ENCODE measurements at regions of chr17 and their contacts with region 1.

Region 1: DNA sequence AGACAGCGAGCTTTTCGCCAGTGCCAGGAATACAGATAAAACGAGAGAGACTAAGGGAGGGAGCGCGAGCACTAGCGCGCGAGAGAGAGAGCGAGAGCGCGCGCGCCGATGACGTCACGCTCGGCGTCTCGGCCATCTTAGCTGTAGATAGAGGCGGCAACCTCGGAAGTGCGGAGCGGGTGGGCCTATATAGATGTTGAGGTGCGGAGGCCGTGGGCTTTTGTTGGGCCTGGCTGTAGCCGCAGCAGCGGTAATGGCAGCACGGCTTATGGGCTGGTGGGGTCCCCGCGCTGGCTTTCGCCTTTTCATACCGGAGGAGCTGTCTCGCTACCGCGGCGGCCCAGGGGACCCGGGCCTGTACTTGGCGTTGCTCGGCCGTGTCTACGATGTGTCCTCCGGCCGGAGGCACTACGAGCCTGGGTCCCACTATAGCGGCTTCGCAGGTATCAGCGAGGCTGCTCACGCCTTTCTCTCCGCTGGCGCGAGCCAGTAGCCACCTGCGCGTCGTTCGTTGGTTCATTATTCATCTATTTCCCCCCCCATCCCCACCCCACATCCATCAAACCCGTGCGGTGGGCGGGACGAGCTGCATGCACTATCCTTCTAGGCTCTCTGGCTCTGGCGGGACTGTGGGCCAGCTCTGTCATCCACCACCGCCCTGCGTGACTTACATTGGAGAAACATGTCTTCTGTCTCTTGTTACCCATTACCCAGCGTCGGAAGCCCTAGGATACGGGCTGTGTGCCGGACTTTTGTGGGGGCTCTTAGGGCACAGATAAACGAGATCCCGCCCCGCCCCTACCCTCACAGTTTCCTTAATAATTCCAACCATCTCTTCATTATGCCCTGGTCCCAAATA is 795 bp downstream of the CYB5D2 start:
- DNase-seq: peak; percentile 95
- ATAC-seq: peak; percentile 82
- H3K4me3 Mint-ChIP-seq: peak overlapping the region; percentile 97
- H3K27ac Mint-ChIP-seq: peak overlapping the region; percentile 99
- H3K4me1 Mint-ChIP-seq: peaks cover 40% of the 10 kb centered on the region
- H3K27me3 Mint-ChIP-seq: no peaks in the 10 kb centered on the region

Region 2: GRCh38 chr17:2233441-2233947 is 1910.3 kb before region 1 on chr17:
- CTCF ChIA-PET with region 1: no interaction called
- POLR2A ChIA-PET with region 1: no interaction called
- intact Hi-C with region 1: no loop called
- DNase-seq: no peak
- ATAC-seq: no peak
- H3K4me3 Mint-ChIP-seq: no peak overlapping the region
- H3K27ac Mint-ChIP-seq: no peak overlapping the region
- H3K4me1 Mint-ChIP-seq: peaks cover 14% of the 10 kb centered on the region
- H3K27me3 Mint-ChIP-seq: no peaks in the 10 kb centered on the region

Region 3: GRCh38 chr17:2401426-2402221 is 1742.2 kb before region 1 on chr17:
- CTCF ChIA-PET with region 1: no interaction called
- POLR2A ChIA-PET with region 1: no interaction called
- intact Hi-C with region 1: loop called in 1 of 2 experiments (anchors 1 kb)
- DNase-seq: peak; percentile 100
- ATAC-seq: peak; percentile 59
- H3K4me3 Mint-ChIP-seq: peak overlapping the region; percentile 88
- H3K27ac Mint-ChIP-seq: peak overlapping the region; percentile 99
- H3K4me1 Mint-ChIP-seq: peaks cover 43% of the 10 kb centered on the region
- H3K27me3 Mint-ChIP-seq: no peaks in the 10 kb centered on the region

Region 4: DNA sequence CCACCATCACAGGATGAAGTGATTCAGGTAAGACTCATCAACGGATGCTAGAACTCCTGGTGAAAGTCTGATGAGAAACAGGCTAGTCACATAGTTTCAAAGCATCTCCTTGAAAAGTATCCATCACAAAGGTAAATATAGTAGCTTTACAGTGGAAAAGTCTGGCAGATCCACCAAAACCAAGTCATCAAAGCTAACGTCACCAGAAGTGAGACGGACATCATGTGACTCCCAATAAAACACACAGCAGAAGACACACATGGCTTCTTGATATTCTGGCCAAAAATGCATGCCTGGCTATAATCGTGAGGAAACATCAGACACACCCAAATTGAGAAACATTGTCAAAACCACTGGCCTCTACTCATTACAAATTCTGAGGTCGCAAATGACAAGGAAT is 568.3 kb before region 1 on chr17:
- CTCF ChIA-PET with region 1: no interaction called
- POLR2A ChIA-PET with region 1: no interaction called
- intact Hi-C with region 1: no loop called
- DNase-seq: no peak
- ATAC-seq: no peak
- H3K4me3 Mint-ChIP-seq: no peak overlapping the region
- H3K27ac Mint-ChIP-seq: no peak overlapping the region
- H3K4me1 Mint-ChIP-seq: no peaks in the 10 kb centered on the region
- H3K27me3 Mint-ChIP-seq: no peaks in the 10 kb centered on the region

Region 5: GRCh38 chr17:3845621-3846441 is 298.0 kb before region 1 on chr17 and contains the start of gene NCBP3:
- CTCF ChIA-PET with region 1: no interaction called
- POLR2A ChIA-PET with region 1: no interaction called
- intact Hi-C with region 1: loop called in 1 of 2 experiments (anchors 1 kb)
- DNase-seq: peak; percentile 96
- ATAC-seq: peak; percentile 93
- H3K4me3 Mint-ChIP-seq: peak within 1 kb of the TSS; percentile 84
- H3K27ac Mint-ChIP-seq: peak within 1 kb of the TSS; percentile 91
- H3K4me1 Mint-ChIP-seq: peaks cover 19% of the 10 kb centered on the region
- H3K27me3 Mint-ChIP-seq: no peaks in the 10 kb centered on the region
- total RNA-seq, gene NCBP3: 35.9 to 44.6 TPM

Region 6: GRCh38 chr17:3944485-3945388 is 199.1 kb before region 1 on chr17:
- CTCF ChIA-PET with region 1: no interaction called
- POLR2A ChIA-PET with region 1: no interaction called
- intact Hi-C with region 1: no loop called
- DNase-seq: peak; percentile 72
- ATAC-seq: peak; percentile 88
- H3K4me3 Mint-ChIP-seq: no peak overlapping the region
- H3K27ac Mint-ChIP-seq: no peak overlapping the region
- H3K4me1 Mint-ChIP-seq: no peaks in the 10 kb centered on the region
- H3K27me3 Mint-ChIP-seq: no peaks in the 10 kb centered on the region

Region 7: GRCh38 chr17:4087906-4088693 is 55.7 kb before region 1 on chr17:
- CTCF ChIA-PET with region 1: no interaction called
- POLR2A ChIA-PET with region 1: no interaction called
- intact Hi-C with region 1: no loop called
- DNase-seq: no peak
- ATAC-seq: no peak
- H3K4me3 Mint-ChIP-seq: no peak overlapping the region
- H3K27ac Mint-ChIP-seq: no peak overlapping the region
- H3K4me1 Mint-ChIP-seq: peaks cover 9% of the 10 kb centered on the region
- H3K27me3 Mint-ChIP-seq: no peaks in the 10 kb centered on the region

Region 8: GRCh38 chr17:4263282-4264215 is 119.8 kb after region 1 on chr17 and contains the start of gene ANKFY1:
- CTCF ChIA-PET with region 1: no interaction called
- POLR2A ChIA-PET with region 1: no interaction called
- intact Hi-C with region 1: loop called (anchors 1 to 5 kb)
- DNase-seq: peak; percentile 99
- ATAC-seq: peak; percentile 99
- H3K4me3 Mint-ChIP-seq: peak within 1 kb of the TSS; percentile 97
- H3K27ac Mint-ChIP-seq: peak within 1 kb of the TSS; percentile 96
- H3K4me1 Mint-ChIP-seq: peaks cover 35% of the 10 kb centered on the region
- H3K27me3 Mint-ChIP-seq: no peaks in the 10 kb centered on the region
- total RNA-seq, gene ANKFY1: 39.8 to 40.7 TPM

Region 9: DNA sequence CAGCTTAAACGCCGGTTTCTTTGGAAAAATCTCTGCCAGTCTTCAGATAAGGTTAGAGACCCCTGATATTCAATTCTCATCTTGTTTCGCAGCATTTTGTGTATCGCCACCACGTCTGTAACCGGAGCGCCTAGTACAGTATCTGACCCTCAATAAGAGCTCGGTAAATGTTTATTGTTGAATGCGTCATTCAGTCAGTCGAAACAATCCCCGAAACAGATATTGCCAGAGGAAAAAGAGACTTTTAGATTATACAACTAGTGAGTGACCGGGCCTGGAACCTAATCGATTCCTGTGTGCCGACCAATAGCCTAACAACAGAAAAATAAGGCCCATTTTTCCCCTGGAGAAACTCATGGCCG is 559.5 kb after region 1 on chr17:
- CTCF ChIA-PET with region 1: no interaction called
- POLR2A ChIA-PET with region 1: no interaction called
- intact Hi-C with region 1: loop called in 1 of 2 experiments (anchors 5 kb)
- DNase-seq: no peak
- ATAC-seq: no peak
- H3K4me3 Mint-ChIP-seq: peak overlapping the region; percentile 84
- H3K27ac Mint-ChIP-seq: peak overlapping the region; percentile 97
- H3K4me1 Mint-ChIP-seq: peaks cover 53% of the 10 kb centered on the region
- H3K27me3 Mint-ChIP-seq: no peaks in the 10 kb centered on the region

Region 10: GRCh38 chr17:4948931-4949320 is 805.1 kb after region 1 on chr17:
- CTCF ChIA-PET with region 1: no interaction called
- POLR2A ChIA-PET with region 1: no interaction called
- intact Hi-C with region 1: loop called in 1 of 2 experiments (anchors 1 kb)
- DNase-seq: peak; percentile 88
- ATAC-seq: peak; percentile 39
- H3K4me3 Mint-ChIP-seq: peak overlapping the region; percentile 99
- H3K27ac Mint-ChIP-seq: peak overlapping the region; percentile 100
- H3K4me1 Mint-ChIP-seq: peaks cover 34% of the 10 kb centered on the region
- H3K27me3 Mint-ChIP-seq: no peaks in the 10 kb centered on the region